ENCODE measurements at regions of chr2 and their contacts with region 1.

Region 1: GRCh38 chr2:231452799-231453508 is 11.3 kb downstream of the NCL start:
- DNase-seq: no peak
- H3K4me3 Mint-ChIP-seq: no peak overlapping the region
- H3K27ac Mint-ChIP-seq: peak overlapping the region; percentile 42
- H3K4me1 Mint-ChIP-seq: peaks cover 2% of the 10 kb centered on the region
- H3K27me3 Mint-ChIP-seq: no peaks in the 10 kb centered on the region
- CTCF ChIP-seq: no peak

Region 2: GRCh38 chr2:231104115-231104713 is 348.7 kb before region 1 on chr2:
- CTCF ChIA-PET with region 1: interaction called, 14 read pairs
- intact Hi-C with region 1: no loop called
- DNase-seq: peak; percentile 61
- H3K4me3 Mint-ChIP-seq: no peak overlapping the region
- H3K27ac Mint-ChIP-seq: no peak overlapping the region
- H3K4me1 Mint-ChIP-seq: peaks cover 10% of the 10 kb centered on the region
- H3K27me3 Mint-ChIP-seq: no peaks in the 10 kb centered on the region
- CTCF ChIP-seq: peak; percentile 67

Region 3: GRCh38 chr2:231144896-231145295 is 308.1 kb before region 1 on chr2:
- CTCF ChIA-PET with region 1: interaction called, 16 read pairs
- intact Hi-C with region 1: no loop called
- DNase-seq: no peak
- H3K4me3 Mint-ChIP-seq: no peak overlapping the region
- H3K27ac Mint-ChIP-seq: no peak overlapping the region
- H3K4me1 Mint-ChIP-seq: no peaks in the 10 kb centered on the region
- H3K27me3 Mint-ChIP-seq: no peaks in the 10 kb centered on the region
- CTCF ChIP-seq: no peak

Region 4: GRCh38 chr2:231227309-231228162 is 225.4 kb before region 1 on chr2:
- CTCF ChIA-PET with region 1: interaction called, 22 read pairs
- intact Hi-C with region 1: loop called (anchors 1 kb)
- DNase-seq: peak; percentile 72
- H3K4me3 Mint-ChIP-seq: no peak overlapping the region
- H3K27ac Mint-ChIP-seq: no peak overlapping the region
- H3K4me1 Mint-ChIP-seq: peaks cover 23% of the 10 kb centered on the region
- H3K27me3 Mint-ChIP-seq: no peaks in the 10 kb centered on the region
- CTCF ChIP-seq: peak; percentile 77

Region 5: GRCh38 chr2:231361671-231362554 is 91.0 kb before region 1 on chr2:
- CTCF ChIA-PET with region 1: no interaction called
- intact Hi-C with region 1: no loop called
- DNase-seq: no peak
- H3K4me3 Mint-ChIP-seq: no peak overlapping the region
- H3K27ac Mint-ChIP-seq: no peak overlapping the region
- H3K4me1 Mint-ChIP-seq: peaks cover 16% of the 10 kb centered on the region
- H3K27me3 Mint-ChIP-seq: no peaks in the 10 kb centered on the region
- CTCF ChIP-seq: no peak

Region 6: DNA sequence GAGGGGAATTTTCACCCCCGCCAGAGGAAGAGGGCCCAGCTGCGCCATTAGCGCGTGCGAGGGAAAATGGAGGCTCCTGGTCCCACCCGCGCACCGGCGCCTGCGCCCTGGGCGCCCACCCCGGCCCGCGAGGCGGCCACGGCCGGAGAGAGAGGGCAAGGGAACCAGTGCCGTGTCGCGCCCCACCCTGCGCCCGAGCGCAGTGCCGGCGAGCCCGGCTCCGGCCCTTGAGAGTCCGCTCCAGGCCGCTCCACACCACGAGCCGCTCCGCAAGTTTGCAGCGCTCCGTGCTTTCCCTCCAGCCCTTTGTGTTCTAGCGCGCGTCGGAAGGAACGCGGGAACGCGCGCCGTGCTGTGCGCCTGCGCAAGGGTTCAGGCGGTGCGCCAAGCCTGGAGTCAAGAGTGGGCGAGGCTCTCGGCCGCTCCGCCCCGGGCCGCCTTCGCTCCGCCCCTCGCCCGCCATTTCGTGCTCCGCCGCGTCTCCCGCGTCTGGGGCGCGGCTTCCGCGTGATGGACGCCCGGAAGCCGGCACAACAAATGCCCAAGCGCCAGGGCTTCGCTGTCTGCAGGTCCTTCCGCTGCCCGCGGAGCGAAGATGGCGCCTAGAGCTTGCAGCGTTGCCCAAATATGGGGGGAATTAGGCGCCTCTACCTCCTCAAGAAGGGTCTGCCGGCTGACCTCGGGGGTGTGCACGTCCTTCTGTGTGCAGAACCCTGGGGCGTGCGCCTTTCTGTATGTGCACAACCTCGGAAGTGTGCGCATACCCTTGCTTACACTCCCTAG is 209.3 kb after region 1 on chr2:
- CTCF ChIA-PET with region 1: no interaction called
- intact Hi-C with region 1: no loop called
- DNase-seq: peak; percentile 97
- H3K4me3 Mint-ChIP-seq: peak overlapping the region; percentile 74
- H3K27ac Mint-ChIP-seq: peak overlapping the region; percentile 40
- H3K4me1 Mint-ChIP-seq: no peaks in the 10 kb centered on the region
- H3K27me3 Mint-ChIP-seq: no peaks in the 10 kb centered on the region
- CTCF ChIP-seq: no peak

Measured in Calu3 (cell line).